CD14-positive monocyte (primary cell): ENCODE measurements at regions of chrX and their contacts with region 1.

Region 1: GRCh38 chrX:109485470-109486340 is 3.8 kb upstream of the GUCY2F start:
- DNase-seq: peak; percentile 56 to 69 (median 65)
- H3K4me3 ChIP-seq: no peak overlapping the region
- H3K4me3 Mint-ChIP-seq: no peak overlapping the region
- H3K27ac ChIP-seq: no peak overlapping the region
- H3K27ac Mint-ChIP-seq: no peak overlapping the region
- H3K4me1 ChIP-seq: peaks cover 23% of the 10 kb centered on the region in 2 donors
- H3K4me1 Mint-ChIP-seq: peaks cover 9% of the 10 kb centered on the region
- H3K27me3 ChIP-seq: peaks cover 0 to 2% of the 10 kb centered on the region in 2 donors
- H3K27me3 Mint-ChIP-seq: peaks cover 0 to 9% (median 0%) of the 10 kb centered on the region in 3 donors
- CTCF ChIP-seq: peak; percentile 92

Region 2: DNA sequence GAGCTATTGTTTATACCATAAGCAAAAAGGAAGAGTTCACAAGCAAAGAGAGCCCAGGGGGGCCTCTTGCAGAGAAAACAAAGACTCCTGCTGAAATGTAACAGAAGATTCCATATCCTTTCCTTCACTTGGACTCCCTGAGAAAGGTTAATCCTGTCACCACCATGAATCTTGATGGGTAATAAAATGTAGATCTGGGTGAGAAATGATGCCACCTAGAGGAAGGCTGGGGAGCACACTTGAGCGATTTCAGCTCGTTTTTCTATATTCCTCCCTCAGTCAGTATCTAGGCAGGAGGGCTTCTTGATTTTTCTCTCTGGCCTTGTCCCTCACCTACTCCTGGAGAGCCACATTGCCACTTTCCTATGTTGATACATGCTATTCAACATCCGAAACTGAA is 149.5 kb after region 1 on chrX:
- intact Hi-C with region 1: loop called (anchors 5 to 10 kb)
- DNase-seq: no peak
- H3K4me3 ChIP-seq: no peak overlapping the region
- H3K4me3 Mint-ChIP-seq: no peak overlapping the region
- H3K27ac ChIP-seq: no peak overlapping the region
- H3K27ac Mint-ChIP-seq: no peak overlapping the region
- H3K4me1 ChIP-seq: peaks cover 0 to 6% of the 10 kb centered on the region in 2 donors
- H3K4me1 Mint-ChIP-seq: peaks cover 7% of the 10 kb centered on the region
- H3K27me3 ChIP-seq: no peaks in the 10 kb centered on the region
- H3K27me3 Mint-ChIP-seq: peaks cover 0 to 13% (median 0%) of the 10 kb centered on the region in 3 donors
- CTCF ChIP-seq: peak; percentile 47

Region 3: GRCh38 chrX:109974906-109975655 is 489.4 kb after region 1 on chrX:
- intact Hi-C with region 1: no loop called
- DNase-seq: no peak
- H3K4me3 ChIP-seq: no peak overlapping the region
- H3K4me3 Mint-ChIP-seq: no peak overlapping the region
- H3K27ac ChIP-seq: no peak overlapping the region
- H3K27ac Mint-ChIP-seq: no peak overlapping the region
- H3K4me1 ChIP-seq: no peaks in the 10 kb centered on the region
- H3K4me1 Mint-ChIP-seq: no peaks in the 10 kb centered on the region
- H3K27me3 ChIP-seq: peaks cover 0 to 4% of the 10 kb centered on the region in 2 donors
- H3K27me3 Mint-ChIP-seq: peaks cover 0 to 12% (median 0%) of the 10 kb centered on the region in 3 donors
- CTCF ChIP-seq: no peak